Sigmoid colon (tissue), 7 donors: ENCODE measurements at regions of chr10 and their contacts with region 1.

Region 1: DNA sequence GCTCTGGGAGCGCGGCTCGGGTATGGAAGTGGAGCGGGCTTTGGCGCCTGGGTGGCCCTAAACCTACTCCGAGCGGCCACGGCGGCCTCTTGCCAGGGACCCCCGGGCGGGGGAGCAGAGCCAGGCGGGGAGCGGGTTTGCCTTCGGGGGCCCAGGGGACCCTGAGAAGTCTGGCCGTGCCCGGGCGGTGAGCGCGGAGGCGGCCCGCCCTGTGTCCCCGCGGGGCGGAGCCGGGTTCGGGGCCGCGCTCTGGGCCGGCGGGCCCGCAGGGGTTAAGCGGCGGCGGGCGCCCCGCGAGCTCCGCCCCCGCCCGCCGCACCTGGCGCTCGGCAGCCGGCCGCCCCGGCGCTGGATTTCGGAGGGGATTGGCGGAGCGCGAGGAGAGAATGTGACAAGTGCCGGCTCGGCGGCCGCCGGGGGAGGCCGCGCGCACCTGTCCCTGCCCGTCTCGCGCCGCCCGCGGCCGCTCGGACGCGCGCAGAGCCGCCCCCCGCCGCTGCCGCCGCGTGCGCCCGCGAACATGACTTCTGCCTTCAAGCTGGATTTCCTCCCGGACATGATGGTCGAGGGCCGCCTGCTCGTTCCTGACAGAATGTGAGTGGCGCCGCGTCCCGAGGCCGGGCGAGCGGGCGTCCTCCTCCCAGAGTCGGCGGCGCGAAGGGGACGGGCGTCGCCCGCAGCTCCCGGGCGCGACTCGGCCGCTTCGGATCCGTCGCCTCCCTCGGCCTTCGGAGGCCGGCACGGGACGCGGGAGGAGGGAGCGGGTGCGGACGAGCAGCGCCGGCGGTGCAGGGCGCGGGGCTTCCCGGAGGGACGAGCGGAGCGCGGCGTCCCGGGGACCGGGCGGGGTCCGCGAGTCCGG is at the start of gene CELF2:
- DNase-seq: peak; percentile 81
- H3K4me3 ChIP-seq: peak within 1 kb of the TSS; percentile 63 to 94 (median 87)
- H3K27ac ChIP-seq: peak within 1 kb of the TSS; percentile 79 to 89 (median 85)
- H3K4me1 ChIP-seq: peaks cover 0 to 22% (median 8%) of the 10 kb centered on the region in 4 donors
- H3K27me3 ChIP-seq: no peaks in the 10 kb centered on the region
- CTCF ChIP-seq: no peak
- EP300 ChIP-seq: no peak
- POLR2A ChIP-seq: no peak
- total RNA-seq, gene CELF2: 48.9 to 83.1 (median 60.3) TPM

Region 2: GRCh38 chr10:10798102-10798863 is 219.5 kb before region 1 on chr10:
- intact Hi-C with region 1: loop called (anchors 5 kb)
- DNase-seq: peak; percentile 71
- H3K4me3 ChIP-seq: peak overlapping the region; percentile 5 to 43 (median 35)
- H3K27ac ChIP-seq: peak overlapping the region; percentile 83 to 90 (median 85)
- H3K4me1 ChIP-seq: peaks cover 0 to 59% (median 44%) of the 10 kb centered on the region in 4 donors
- H3K27me3 ChIP-seq: no peaks in the 10 kb centered on the region
- CTCF ChIP-seq: no peak
- EP300 ChIP-seq: no peak
- POLR2A ChIP-seq: no peak

Region 3: GRCh38 chr10:10911471-10911921 is 106.3 kb before region 1 on chr10:
- intact Hi-C with region 1: loop called (anchors 5 kb)
- DNase-seq: peak; percentile 93
- H3K4me3 ChIP-seq: peak overlapping the region; percentile 25 to 42 (median 36)
- H3K27ac ChIP-seq: peak overlapping the region; percentile 73 to 86 (median 84)
- H3K4me1 ChIP-seq: peaks cover 0 to 46% (median 32%) of the 10 kb centered on the region in 4 donors
- H3K27me3 ChIP-seq: no peaks in the 10 kb centered on the region
- CTCF ChIP-seq: no peak
- EP300 ChIP-seq: no peak
- POLR2A ChIP-seq: no peak

Region 4: GRCh38 chr10:11165591-11166543 is 148.1 kb after region 1 on chr10:
- intact Hi-C with region 1: loop called (anchors 2 kb)
- DNase-seq: peak; percentile 89
- H3K4me3 ChIP-seq: peak overlapping the region; percentile 50 to 84 (median 77)
- H3K27ac ChIP-seq: peak overlapping the region; percentile 82 to 92 (median 86)
- H3K4me1 ChIP-seq: peaks cover 0 to 57% (median 39%) of the 10 kb centered on the region in 4 donors
- H3K27me3 ChIP-seq: no peaks in the 10 kb centered on the region
- CTCF ChIP-seq: peak; percentile 14 to 58 (median 43)
- EP300 ChIP-seq: no peak
- POLR2A ChIP-seq: no peak